Caco-2 (cell line): ENCODE measurements at regions of chr10 and their contacts with region 1.

Region 1: DNA sequence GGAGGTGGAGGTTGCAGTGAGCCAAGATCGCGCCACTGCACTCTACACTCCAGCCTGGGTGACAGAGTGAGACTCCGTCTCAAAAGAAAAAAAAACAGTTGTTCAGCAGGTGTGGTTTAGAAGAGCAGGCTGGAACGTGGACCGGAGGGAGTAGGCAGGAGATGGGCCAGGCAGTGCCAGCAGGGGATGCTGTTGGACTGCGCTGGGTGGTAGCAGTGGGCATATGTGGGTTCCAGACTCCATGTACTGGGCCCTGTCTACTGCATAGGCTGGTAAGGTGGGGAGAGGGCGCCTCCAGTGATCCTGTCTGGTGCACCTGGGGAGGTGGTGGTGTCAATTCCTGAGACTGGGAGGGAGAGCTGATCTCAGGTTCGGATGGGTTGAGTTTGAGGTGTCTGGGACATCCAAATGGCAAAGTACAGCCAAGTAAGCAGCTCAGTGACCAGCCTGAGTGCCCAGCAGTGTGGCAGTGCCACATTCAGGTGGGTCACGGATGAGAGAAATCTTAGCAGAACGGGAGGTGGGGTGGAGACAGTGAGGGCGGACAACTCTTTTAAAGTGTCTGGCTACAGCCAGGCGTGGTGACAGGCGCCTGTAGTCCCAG is 25.9 kb downstream of the SFXN4 start:
- DNase-seq: peak; percentile 47 to 53
- H3K4me3 ChIP-seq: no peak overlapping the region
- H3K4me3 Mint-ChIP-seq: no peak overlapping the region
- H3K27ac Mint-ChIP-seq: peak overlapping the region; percentile 37
- H3K4me1 ChIP-seq: no peaks in the 10 kb centered on the region
- H3K4me1 Mint-ChIP-seq: peaks cover 5% of the 10 kb centered on the region
- H3K27me3 ChIP-seq: no peaks in the 10 kb centered on the region
- H3K27me3 Mint-ChIP-seq: no peaks in the 10 kb centered on the region
- CTCF ChIP-seq: peak in 1 of 2 experiments; percentile 60

Region 2: GRCh38 chr10:119098576-119098975 is 41.0 kb before region 1 on chr10:
- CTCF ChIA-PET with region 1: no interaction called
- POLR2A ChIA-PET with region 1: interaction called, 13 read pairs
- intact Hi-C with region 1: no loop called
- DNase-seq: no peak
- H3K4me3 ChIP-seq: no peak overlapping the region
- H3K4me3 Mint-ChIP-seq: no peak overlapping the region
- H3K27ac Mint-ChIP-seq: no peak overlapping the region
- H3K4me1 ChIP-seq: no peaks in the 10 kb centered on the region
- H3K4me1 Mint-ChIP-seq: peaks cover 12% of the 10 kb centered on the region
- H3K27me3 ChIP-seq: no peaks in the 10 kb centered on the region
- H3K27me3 Mint-ChIP-seq: no peaks in the 10 kb centered on the region
- CTCF ChIP-seq: no peak

Region 3: DNA sequence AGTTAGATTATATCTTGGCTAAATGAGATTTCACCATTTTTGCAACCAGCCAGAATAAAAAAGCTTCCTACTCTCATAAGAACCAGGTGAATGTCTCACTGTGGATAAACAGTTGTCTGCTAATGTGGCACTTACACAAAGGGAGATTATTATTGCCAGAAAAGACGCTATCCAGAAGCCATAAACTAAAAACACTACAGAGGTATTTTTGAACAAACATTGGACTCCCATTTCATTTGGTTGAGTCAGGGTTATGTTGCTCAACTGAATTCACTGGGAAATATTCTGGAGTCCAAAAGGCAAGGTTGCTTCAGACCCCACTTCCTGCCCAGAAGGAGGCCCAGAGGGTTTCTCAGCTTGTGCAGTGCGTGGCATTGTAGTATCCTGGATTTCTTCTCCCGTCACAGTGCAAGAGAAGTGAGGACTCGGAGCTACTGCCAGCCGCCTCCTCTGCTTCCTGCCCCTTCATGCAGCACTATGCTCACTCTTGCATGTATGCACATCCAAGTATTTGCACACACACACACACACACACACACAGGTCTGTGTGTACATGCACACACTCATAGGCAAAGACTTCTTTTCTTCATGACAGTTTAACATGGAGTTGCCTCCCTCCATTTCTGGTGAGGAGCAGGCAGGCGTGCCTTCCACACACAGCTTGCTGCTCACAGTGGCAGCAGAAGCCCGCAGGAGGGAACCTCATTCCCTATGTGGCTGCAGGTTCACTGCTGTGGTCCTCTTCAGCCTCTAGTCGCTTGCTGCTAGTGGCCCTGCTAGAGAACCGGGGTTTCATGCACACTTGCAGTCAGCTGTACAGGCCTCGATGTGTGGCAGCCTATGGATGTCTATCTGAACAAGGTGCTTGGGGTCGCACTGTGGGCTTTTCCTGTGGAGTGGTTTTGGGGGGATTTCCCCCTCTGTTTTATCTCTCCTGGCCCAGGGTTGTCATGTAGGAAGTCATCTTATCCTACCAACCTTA is 25.5 kb before region 1 on chr10:
- CTCF ChIA-PET with region 1: interaction called, 13 read pairs
- POLR2A ChIA-PET with region 1: interaction called, 9 read pairs
- intact Hi-C with region 1: no loop called
- DNase-seq: peak; percentile 78 to 84
- H3K4me3 ChIP-seq: no peak overlapping the region
- H3K4me3 Mint-ChIP-seq: peak overlapping the region; percentile 43
- H3K27ac Mint-ChIP-seq: peak overlapping the region; percentile 74
- H3K4me1 ChIP-seq: peaks cover 19% of the 10 kb centered on the region
- H3K4me1 Mint-ChIP-seq: peaks cover 8% of the 10 kb centered on the region
- H3K27me3 ChIP-seq: no peaks in the 10 kb centered on the region
- H3K27me3 Mint-ChIP-seq: no peaks in the 10 kb centered on the region
- CTCF ChIP-seq: no peak

Region 4: GRCh38 chr10:119161680-119162079 is 22.1 kb after region 1 on chr10:
- CTCF ChIA-PET with region 1: no interaction called
- POLR2A ChIA-PET with region 1: no interaction called
- intact Hi-C with region 1: no loop called
- DNase-seq: no peak
- H3K4me3 ChIP-seq: no peak overlapping the region
- H3K4me3 Mint-ChIP-seq: no peak overlapping the region
- H3K27ac Mint-ChIP-seq: no peak overlapping the region
- H3K4me1 ChIP-seq: peaks cover 6% of the 10 kb centered on the region; the same call in 1 of the 2 replicates
- H3K4me1 Mint-ChIP-seq: no peaks in the 10 kb centered on the region
- H3K27me3 ChIP-seq: no peaks in the 10 kb centered on the region
- H3K27me3 Mint-ChIP-seq: no peaks in the 10 kb centered on the region
- CTCF ChIP-seq: no peak